MCF 10A (cell line): ENCODE measurements at regions of chr5 and their contacts with region 1.

Region 1: DNA sequence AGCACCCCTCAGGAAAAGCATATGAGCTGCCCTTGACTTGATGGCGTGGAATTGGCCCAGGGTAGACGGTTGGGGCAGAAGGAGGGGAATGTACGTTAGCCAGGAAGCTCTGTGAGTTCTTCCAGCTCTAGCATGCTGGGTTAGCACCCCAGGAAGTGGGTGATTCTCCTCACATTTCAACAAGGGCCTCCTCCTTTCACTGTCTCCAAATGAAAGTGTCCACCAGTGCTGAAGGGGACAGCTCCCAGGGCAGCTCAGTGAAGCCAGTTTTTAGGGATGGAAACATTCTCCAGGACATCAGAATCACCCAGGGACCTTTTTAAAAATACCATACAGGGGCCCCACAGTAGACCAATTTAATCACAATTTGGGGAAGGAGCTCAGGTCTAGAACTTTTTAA is 17.2 kb upstream of the AFAP1L1 start:
- DNase-seq: peak; percentile 43
- H3K4me3 Mint-ChIP-seq: no peak overlapping the region
- H3K27ac Mint-ChIP-seq: peak overlapping the region; percentile 10
- H3K4me1 Mint-ChIP-seq: peaks cover 13% of the 10 kb centered on the region
- H3K27me3 Mint-ChIP-seq: no peaks in the 10 kb centered on the region
- CTCF ChIP-seq: no peak

Region 2: GRCh38 chr5:149268928-149269557 is 14.5 kb after region 1 on chr5:
- CTCF ChIA-PET with region 1: interaction called, 25 read pairs
- POLR2A ChIA-PET with region 1: interaction called, 3 read pairs
- intact Hi-C with region 1: no loop called
- DNase-seq: peak; percentile 84
- H3K4me3 Mint-ChIP-seq: no peak overlapping the region
- H3K27ac Mint-ChIP-seq: no peak overlapping the region
- H3K4me1 Mint-ChIP-seq: peaks cover 14% of the 10 kb centered on the region
- H3K27me3 Mint-ChIP-seq: no peaks in the 10 kb centered on the region
- CTCF ChIP-seq: peak; percentile 91